ENCODE measurements at regions of chr2 and their contacts with region 1.

Region 1: GRCh38 chr2:120436885-120437603 is 91.1 kb downstream of the INHBB start:
- DNase-seq: peak; percentile 80
- ATAC-seq: peak; percentile 80
- H3K4me3 ChIP-seq: no peak overlapping the region
- H3K27ac ChIP-seq: no peak overlapping the region
- H3K4me1 ChIP-seq: peaks cover 27% of the 10 kb centered on the region
- H3K27me3 ChIP-seq: peaks cover 23 to 80% of the 10 kb centered on the region in 2 experiments
- CTCF ChIP-seq: peak; percentile 82
- EP300 ChIP-seq: no peak
- POLR2A ChIP-seq: no peak
- RAD21 ChIP-seq: peak; percentile 95

Region 2: GRCh38 chr2:120396013-120396885 is 40.8 kb before region 1 on chr2:
- CTCF ChIA-PET with region 1: interaction called, 8 read pairs
- POLR2A ChIA-PET with region 1: interaction called, 3 read pairs
- in situ Hi-C with region 1: no loop called
- intact Hi-C with region 1: loop called (anchors 2 kb)
- DNase-seq: peak; percentile 44
- ATAC-seq: no peak
- H3K4me3 ChIP-seq: no peak overlapping the region
- H3K27ac ChIP-seq: no peak overlapping the region
- H3K4me1 ChIP-seq: peaks cover 60% of the 10 kb centered on the region
- H3K27me3 ChIP-seq: peaks cover 0 to 3% of the 10 kb centered on the region in 2 experiments; a peak in 2 of 5 replicates
- CTCF ChIP-seq: no peak
- EP300 ChIP-seq: no peak
- POLR2A ChIP-seq: no peak
- RAD21 ChIP-seq: no peak

Region 3: DNA sequence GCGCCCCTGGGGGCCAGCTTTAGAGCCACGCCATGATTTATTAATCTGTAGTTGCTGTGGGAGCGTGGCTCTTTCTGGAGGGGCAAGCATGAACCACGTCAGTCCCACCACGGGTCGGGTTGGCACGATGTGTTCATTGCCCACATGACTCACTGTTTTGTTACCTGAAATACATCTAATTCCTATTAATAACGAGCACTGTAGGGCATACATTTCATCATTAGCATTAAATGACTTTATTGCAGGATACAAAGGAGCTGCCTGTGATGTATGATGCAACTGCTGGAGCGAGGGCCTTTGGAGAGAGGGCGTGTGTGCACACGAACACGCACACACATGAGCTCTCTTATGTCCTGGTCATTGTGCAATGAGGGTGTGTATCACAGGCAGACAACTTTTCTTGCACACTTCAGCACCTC is 35.9 kb after region 1 on chr2:
- CTCF ChIA-PET with region 1: no interaction called
- POLR2A ChIA-PET with region 1: no interaction called
- in situ Hi-C with region 1: no loop called
- intact Hi-C with region 1: no loop called
- DNase-seq: no peak
- ATAC-seq: no peak
- H3K4me3 ChIP-seq: no peak overlapping the region
- H3K27ac ChIP-seq: no peak overlapping the region
- H3K4me1 ChIP-seq: peaks cover 89% of the 10 kb centered on the region
- H3K27me3 ChIP-seq: no peaks in the 10 kb centered on the region
- CTCF ChIP-seq: no peak
- EP300 ChIP-seq: no peak
- POLR2A ChIP-seq: no peak
- RAD21 ChIP-seq: no peak

Region 4: GRCh38 chr2:120520929-120521912 is 84.2 kb after region 1 on chr2:
- CTCF ChIA-PET with region 1: interaction called, 6 read pairs
- POLR2A ChIA-PET with region 1: no interaction called
- in situ Hi-C with region 1: no loop called
- intact Hi-C with region 1: loop called (anchors 2 kb)
- DNase-seq: peak; percentile 60
- ATAC-seq: peak; percentile 37
- H3K4me3 ChIP-seq: no peak overlapping the region
- H3K27ac ChIP-seq: no peak overlapping the region
- H3K4me1 ChIP-seq: peaks cover 72% of the 10 kb centered on the region
- H3K27me3 ChIP-seq: peaks cover 0 to 5% of the 10 kb centered on the region in 2 experiments; a peak in 1 of 5 replicates
- CTCF ChIP-seq: peak; percentile 77
- EP300 ChIP-seq: no peak
- POLR2A ChIP-seq: no peak
- RAD21 ChIP-seq: peak; percentile 80

Region 5: DNA sequence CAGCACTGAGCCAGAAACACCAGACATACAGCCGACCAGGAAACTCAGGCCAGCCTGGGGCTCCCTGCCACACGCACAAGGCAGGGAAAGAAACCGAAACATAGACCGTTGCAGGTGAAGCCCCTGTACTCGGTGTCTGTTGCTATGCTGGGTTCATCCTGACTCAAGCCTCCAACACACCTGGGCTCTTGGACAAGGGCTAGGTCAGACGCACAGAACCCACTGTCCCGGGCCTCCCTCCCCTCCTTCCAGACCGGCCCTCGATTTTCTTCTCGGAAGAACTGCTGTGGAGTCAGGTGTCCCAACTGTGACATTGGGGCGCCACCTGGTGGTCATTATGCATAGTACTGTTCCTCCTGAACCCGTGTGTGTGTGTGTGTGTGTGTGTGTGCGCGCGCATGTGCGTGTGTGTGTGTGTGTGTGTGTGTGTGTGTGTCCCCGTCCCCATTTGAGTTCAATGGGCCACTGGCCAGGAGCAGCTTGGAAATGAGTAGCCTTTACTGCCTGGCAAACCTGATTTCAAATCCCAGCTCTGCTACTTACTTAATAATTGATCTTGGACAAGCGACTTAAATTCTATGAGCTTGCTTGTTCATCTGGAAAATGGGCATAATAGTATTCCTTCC is 243.2 kb after region 1 on chr2:
- CTCF ChIA-PET with region 1: interaction called, 7 read pairs
- POLR2A ChIA-PET with region 1: no interaction called
- in situ Hi-C with region 1: no loop called
- intact Hi-C with region 1: loop called (anchors 1 kb)
- DNase-seq: peak; percentile 82
- ATAC-seq: peak; percentile 85
- H3K4me3 ChIP-seq: no peak overlapping the region
- H3K27ac ChIP-seq: no peak overlapping the region
- H3K4me1 ChIP-seq: peaks cover 5% of the 10 kb centered on the region; the same call in 1 of the 2 replicates
- H3K27me3 ChIP-seq: peaks cover 2 to 63% of the 10 kb centered on the region in 2 experiments; a peak in 3 of 5 replicates
- CTCF ChIP-seq: peak; percentile 93
- EP300 ChIP-seq: no peak
- POLR2A ChIP-seq: no peak
- RAD21 ChIP-seq: peak; percentile 88

Measured in HepG2 (cell line).